Ovary (tissue), 10 donors: ENCODE measurements at regions of chr17 and their contacts with region 1.

Region 1: GRCh38 chr17:80426681-80427326 is 11.8 kb downstream of the ENDOV start:
- DNase-seq: peak; percentile 56 to 82 (median 79)
- H3K4me3 ChIP-seq: no peak overlapping the region
- H3K27ac ChIP-seq: no peak overlapping the region
- H3K4me1 ChIP-seq: no peaks in the 10 kb centered on the region
- H3K27me3 ChIP-seq: no peaks in the 10 kb centered on the region
- CTCF ChIP-seq: peak; percentile 87 to 97 (median 97)
- EP300 ChIP-seq: no peak
- POLR2A ChIP-seq: no peak

Region 2: GRCh38 chr17:80539022-80539641 is 112.3 kb after region 1 on chr17:
- intact Hi-C with region 1: no loop called
- DNase-seq: no peak
- H3K4me3 ChIP-seq: no peak overlapping the region
- H3K27ac ChIP-seq: no peak overlapping the region
- H3K4me1 ChIP-seq: no peaks in the 10 kb centered on the region
- H3K27me3 ChIP-seq: no peaks in the 10 kb centered on the region
- CTCF ChIP-seq: no peak
- EP300 ChIP-seq: no peak
- POLR2A ChIP-seq: no peak

Region 3: DNA sequence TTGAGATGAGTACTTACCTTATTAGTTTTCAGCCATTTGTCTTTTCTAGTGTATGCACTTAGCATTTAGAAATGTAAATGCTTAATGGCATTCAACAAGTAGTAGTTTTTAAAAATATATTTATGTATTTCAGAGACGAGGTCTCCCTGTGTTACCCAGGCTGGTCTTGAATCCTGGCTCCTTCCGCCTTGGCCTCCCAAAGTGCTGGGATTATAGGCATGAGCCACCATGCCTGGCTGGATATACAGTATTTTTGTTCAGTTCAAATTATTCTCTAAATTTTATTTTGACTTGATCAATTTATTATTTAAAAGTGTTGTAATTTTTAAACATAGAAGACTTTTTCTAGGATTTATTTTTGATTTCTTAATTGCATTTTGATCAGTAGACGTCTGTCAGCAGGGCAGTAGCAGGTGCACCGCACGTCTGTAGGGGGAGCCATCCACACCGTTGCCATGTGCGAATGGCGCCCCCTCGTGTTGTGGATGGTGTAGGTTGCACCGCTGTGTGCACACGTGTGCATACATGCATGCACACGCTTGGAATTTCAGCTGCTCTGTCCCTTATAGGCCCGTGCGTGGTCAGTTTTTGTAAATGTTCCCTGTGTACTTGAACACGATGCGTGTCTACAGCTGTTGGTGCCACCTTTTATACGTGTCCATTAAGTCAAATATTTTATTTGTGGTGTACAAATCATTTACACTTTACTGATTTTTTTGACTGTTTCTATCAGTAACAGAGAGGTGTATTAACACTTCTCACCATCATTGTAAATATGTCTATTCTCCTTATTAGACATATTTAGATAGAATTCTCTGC is 148.5 kb after region 1 on chr17:
- intact Hi-C with region 1: loop called in 1 of 4 experiments (anchors 10 kb)
- DNase-seq: peak; percentile 14 to 74 (median 53)
- H3K4me3 ChIP-seq: no peak overlapping the region
- H3K27ac ChIP-seq: no peak overlapping the region
- H3K4me1 ChIP-seq: no peaks in the 10 kb centered on the region
- H3K27me3 ChIP-seq: no peaks in the 10 kb centered on the region
- CTCF ChIP-seq: peak; percentile 24 to 47 (median 45)
- EP300 ChIP-seq: no peak
- POLR2A ChIP-seq: no peak

Region 4: DNA sequence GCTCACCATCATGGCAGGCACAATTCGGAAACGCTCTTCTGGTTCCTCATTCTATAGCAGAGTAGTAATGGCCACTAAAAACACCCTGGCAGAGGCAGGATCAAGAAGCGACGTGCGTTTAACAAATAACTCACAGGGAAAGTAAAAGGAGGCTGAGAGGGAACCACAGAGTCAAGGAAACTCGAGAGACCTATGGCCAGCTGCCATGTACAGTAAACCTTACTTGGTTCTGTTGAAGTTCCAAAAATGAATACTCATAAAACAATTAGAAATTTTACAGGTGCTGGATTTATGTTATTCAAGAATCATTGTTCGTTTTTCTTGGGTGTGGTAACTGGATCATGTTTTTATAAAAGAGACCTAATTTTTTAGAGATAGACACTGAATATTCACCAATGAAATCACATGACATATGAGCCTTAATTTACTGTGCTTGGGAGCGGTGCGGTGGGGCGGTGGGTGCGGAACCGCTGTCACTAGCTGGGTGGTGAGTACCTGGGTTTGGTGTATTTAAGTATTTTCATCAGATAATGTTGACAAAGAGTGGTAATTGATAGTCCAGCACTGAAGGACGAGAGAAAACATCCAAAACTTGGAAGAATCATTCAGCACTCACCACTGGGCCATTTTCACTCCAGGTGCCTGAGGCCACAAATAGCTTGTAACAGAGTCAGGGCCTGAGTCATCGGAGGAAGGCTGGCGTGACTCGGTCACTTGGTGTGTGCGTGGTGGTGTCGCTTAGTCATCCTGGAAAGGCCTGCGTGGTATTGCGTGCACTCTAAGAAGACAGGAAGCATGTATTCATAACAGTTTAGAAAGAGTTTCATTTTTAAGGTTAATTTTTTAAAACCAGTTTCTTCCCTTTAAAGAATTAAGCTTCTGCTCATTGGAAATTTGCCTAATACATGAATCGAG is 429.4 kb after region 1 on chr17:
- intact Hi-C with region 1: loop called in 1 of 4 experiments (anchors 5 kb)
- DNase-seq: no peak
- H3K4me3 ChIP-seq: no peak overlapping the region
- H3K27ac ChIP-seq: no peak overlapping the region
- H3K4me1 ChIP-seq: peaks cover 18% of the 10 kb centered on the region
- H3K27me3 ChIP-seq: no peaks in the 10 kb centered on the region
- CTCF ChIP-seq: no peak
- EP300 ChIP-seq: no peak
- POLR2A ChIP-seq: no peak

Region 5: DNA sequence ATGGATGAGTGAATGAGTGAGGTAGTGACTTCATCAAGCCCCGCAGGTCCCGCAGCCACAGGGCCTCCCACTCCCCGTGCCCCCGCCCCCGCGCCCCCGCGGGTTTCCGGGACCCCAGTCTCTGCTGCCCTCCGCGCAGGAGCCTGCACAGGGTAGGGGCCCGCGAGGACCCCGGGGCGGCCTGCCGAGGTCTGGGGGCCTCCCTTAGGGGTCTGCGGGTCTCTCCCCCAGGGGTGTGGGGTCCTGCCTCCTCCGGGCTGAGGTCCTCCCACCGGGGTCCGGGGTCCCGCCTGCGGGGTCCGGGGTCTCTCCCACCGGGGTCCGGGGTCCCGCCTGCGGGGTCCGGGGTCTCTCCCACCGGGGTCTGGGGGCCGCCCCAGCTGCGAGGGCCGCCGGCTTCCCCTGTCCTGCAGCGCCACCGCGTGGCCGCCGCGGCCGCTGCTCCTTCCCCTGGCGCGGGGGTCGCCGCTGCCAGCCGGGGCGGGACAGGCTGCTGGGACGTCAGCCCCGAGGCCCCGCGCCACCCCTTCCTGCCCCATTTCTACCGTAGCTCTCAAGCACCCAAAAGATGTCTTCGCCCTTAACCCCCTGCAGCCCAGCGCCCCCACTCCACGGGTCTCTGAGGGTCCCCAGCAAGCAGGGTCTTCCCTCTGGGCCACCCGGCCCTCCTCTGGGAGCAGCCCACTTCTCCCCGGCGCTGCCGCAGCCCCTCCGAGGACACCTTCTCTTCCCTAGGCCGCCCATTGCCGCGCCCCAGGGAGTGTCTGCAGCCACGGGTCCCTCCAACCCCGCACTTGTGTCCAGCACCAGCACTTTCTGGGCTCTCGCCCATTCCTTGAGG is 554.5 kb after region 1 on chr17:
- intact Hi-C with region 1: loop called (anchors 2 to 5 kb)
- DNase-seq: peak in 2 of 5 donors; percentile 31 to 63
- H3K4me3 ChIP-seq: no peak overlapping the region
- H3K27ac ChIP-seq: no peak overlapping the region
- H3K4me1 ChIP-seq: no peaks in the 10 kb centered on the region
- H3K27me3 ChIP-seq: no peaks in the 10 kb centered on the region
- CTCF ChIP-seq: peak; percentile 78 to 92 (median 88)
- EP300 ChIP-seq: no peak
- POLR2A ChIP-seq: no peak

Region 6: DNA sequence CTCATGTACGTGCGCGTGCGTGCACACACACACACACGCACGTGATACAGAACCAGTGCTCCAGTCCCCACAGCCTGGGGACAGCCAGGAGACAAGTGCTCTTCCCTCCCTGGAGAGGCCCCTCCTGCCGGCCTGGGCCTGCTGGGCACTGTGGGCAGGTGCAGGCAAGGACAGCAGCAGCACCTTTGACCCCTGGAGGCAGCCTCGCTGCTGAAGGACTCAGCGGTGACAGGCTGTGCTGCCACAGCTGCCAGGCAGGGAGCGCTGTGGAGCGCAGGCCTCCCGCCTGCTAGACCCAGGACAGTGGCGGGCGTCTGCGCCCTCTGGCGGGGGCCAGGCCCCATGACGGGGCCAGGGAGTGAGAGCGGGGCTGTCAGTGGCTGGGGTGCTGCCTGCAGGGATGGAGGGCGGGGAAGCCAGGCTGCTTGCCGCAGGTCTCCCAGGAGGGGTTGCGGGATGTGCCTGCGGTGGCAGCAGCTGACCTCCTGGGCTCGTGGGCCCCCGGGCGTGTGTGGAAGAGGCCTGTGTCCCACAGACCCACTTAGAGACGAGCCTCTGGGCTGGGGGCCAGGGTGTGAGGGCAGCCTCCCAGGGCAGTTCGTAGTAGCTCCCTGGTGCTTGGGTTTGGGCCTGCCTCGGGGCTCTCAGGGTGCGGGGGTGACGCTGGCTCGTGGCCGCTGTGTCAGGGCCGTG is 675.0 kb after region 1 on chr17:
- intact Hi-C with region 1: loop called in 3 of 4 experiments (anchors 10 kb)
- DNase-seq: peak; percentile 60 to 86 (median 78)
- H3K4me3 ChIP-seq: no peak overlapping the region
- H3K27ac ChIP-seq: no peak overlapping the region
- H3K4me1 ChIP-seq: peaks cover 5% of the 10 kb centered on the region
- H3K27me3 ChIP-seq: no peaks in the 10 kb centered on the region
- CTCF ChIP-seq: peak; percentile 97 to 98 (median 97)
- EP300 ChIP-seq: no peak
- POLR2A ChIP-seq: no peak